Calu3 (cell line): ENCODE measurements at regions of chr16 and their contacts with region 1.

Region 1: GRCh38 chr16:75110637-75111513 is 5.7 kb downstream of the LDHD start:
- DNase-seq: peak; percentile 91
- H3K4me3 Mint-ChIP-seq: no peak overlapping the region
- H3K27ac Mint-ChIP-seq: no peak overlapping the region
- H3K4me1 Mint-ChIP-seq: peaks cover 31% of the 10 kb centered on the region
- H3K27me3 Mint-ChIP-seq: no peaks in the 10 kb centered on the region
- CTCF ChIP-seq: peak; percentile 91

Region 2: DNA sequence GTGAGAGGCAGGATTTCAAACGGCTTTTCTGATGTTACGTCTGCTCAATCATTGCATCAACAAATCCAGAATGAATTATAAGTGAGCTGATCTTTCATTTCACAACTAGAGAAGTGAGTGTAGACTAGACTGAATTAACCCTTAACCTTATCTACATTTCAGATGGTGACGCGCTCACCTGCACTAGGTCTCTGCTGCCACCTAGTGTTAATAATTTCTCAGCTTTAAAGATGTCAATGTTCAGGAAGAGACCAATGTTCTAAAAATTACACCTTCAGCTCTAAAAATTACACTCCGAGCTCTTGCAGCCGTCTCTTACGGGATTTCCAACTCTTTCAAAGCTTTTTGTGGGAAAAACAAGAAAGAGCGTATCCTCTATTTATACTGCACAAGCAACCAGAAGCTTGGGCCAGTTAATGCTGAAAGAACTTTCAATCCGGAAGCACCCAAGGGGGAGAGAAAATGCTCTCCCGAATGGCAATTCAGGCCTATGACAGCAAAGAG is 248.1 kb before region 1 on chr16:
- CTCF ChIA-PET with region 1: interaction called, 10 read pairs
- intact Hi-C with region 1: no loop called
- DNase-seq: peak; percentile 45
- H3K4me3 Mint-ChIP-seq: no peak overlapping the region
- H3K27ac Mint-ChIP-seq: peak overlapping the region; percentile 26
- H3K4me1 Mint-ChIP-seq: peaks cover 9% of the 10 kb centered on the region
- H3K27me3 Mint-ChIP-seq: no peaks in the 10 kb centered on the region
- CTCF ChIP-seq: peak; percentile 91

Region 3: DNA sequence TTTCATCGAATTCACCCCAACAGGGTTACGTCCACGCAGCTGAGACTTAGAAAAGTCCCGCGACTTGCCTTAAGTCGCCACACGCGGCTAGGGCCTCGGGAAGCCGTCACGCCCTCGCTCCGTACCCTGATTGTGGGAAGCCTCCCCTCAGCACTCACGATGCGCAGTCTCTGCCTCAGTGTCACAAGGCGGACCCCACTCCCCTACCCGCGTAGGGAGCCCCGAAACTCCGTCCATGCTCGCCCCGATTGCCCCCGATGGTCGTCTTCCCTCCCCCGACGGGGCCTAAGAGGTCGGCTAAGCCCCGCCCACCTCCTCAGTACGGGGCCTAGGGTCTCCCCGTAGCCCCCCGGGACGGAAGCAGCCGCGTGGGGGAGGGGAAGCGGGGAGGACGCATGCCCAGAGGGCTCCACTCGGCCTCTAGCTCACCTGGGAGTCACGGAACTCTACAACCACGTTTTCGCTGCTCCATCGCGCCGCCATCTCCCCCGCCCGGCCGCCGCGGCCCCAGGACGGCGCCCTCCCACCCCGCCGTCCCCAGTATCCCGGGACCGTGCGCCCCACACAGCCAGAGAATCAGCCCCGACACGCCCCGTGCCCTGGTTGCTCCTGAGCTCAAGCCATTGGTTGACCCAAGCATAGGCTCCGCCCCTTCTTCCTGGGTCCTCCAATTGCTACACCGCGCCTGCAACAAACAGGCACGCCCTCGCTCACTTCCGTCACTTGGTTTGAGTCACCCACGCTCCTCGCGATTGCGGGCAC is 126.2 kb before region 1 on chr16 and contains the start of gene WDR59:
- CTCF ChIA-PET with region 1: interaction called, 30 read pairs
- intact Hi-C with region 1: no loop called
- DNase-seq: peak; percentile 99
- H3K4me3 Mint-ChIP-seq: peak within 1 kb of the TSS; percentile 79
- H3K27ac Mint-ChIP-seq: peak within 1 kb of the TSS; percentile 86
- H3K4me1 Mint-ChIP-seq: no peaks in the 10 kb centered on the region
- H3K27me3 Mint-ChIP-seq: no peaks in the 10 kb centered on the region
- CTCF ChIP-seq: no peak
- total RNA-seq, gene WDR59: 95.4 and 97.3 TPM in 2 replicates

Region 4: DNA sequence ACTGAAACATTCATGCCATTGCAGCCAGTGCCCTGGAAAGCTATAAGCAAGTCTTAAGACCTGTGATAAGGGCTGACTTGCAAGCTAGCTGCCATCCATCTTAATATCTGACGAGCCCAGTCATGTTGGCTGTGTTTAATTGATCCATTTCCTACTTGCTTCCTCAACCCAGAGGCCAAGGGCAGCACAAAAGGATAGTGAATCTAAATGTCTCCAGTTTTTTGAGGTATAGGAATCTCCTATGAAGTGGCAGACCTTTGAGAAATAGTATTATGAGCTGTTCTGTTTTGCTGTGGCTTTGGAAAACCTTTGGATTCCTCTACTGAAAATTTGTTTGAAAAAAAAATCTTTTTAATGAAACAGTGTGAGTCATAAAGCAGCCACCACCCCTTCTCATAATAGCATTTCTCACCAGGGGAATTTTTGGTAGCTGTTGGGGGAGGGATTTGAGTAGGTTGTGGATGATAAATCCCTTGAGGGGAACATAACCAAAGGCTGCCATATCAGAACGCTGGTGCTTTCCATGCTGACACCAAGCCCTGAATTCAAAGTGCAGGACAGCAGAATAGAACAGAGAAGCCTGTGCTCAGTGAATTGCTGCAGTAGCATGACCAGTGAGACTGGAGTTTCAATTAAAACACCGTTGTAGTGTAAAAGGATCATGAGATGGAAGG is 99.1 kb before region 1 on chr16:
- CTCF ChIA-PET with region 1: interaction called, 16 read pairs
- intact Hi-C with region 1: no loop called
- DNase-seq: peak; percentile 51
- H3K4me3 Mint-ChIP-seq: peak overlapping the region; percentile 34
- H3K27ac Mint-ChIP-seq: peak overlapping the region; percentile 33
- H3K4me1 Mint-ChIP-seq: peaks cover 24% of the 10 kb centered on the region
- H3K27me3 Mint-ChIP-seq: no peaks in the 10 kb centered on the region
- CTCF ChIP-seq: no peak

Region 5: DNA sequence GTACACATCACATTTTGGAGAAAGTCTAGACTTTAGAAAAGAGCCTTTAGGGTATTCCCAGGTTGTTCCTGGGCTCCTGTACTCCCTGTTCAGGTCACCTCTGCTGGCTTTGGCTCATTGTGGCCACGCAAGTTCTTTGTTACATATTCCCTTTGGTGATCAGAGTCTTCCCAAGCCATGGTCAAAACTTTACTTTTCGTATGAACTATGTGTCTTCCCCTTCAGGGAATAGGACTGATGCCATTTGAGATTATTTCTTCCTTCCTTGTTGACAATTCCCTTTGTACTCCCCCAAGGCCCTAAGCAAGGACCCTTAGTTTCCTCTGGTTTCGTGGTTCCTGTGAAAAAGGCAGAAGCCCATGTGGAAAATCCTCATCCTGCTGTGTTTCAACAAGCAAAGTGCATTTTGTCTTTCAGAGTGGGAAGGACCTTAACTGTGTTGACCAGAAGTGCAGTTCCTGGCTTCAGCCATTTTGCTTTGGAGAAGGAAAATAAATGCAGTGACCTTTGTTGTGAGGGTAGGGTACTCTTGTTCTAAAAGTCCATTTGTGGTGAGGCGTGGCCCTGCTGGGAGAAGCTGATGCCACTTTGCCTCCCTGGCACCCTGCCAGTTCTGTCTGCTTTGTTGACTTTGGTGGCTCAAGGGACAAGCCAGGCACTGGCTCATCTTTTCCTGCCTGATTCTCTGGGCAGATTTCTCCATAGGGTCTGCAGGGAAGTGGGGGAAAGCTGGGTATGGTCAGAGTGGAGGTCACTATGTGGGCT is 56.9 kb before region 1 on chr16:
- CTCF ChIA-PET with region 1: no interaction called
- intact Hi-C with region 1: no loop called
- DNase-seq: peak; percentile 55
- H3K4me3 Mint-ChIP-seq: no peak overlapping the region
- H3K27ac Mint-ChIP-seq: no peak overlapping the region
- H3K4me1 Mint-ChIP-seq: peaks cover 13% of the 10 kb centered on the region
- H3K27me3 Mint-ChIP-seq: no peaks in the 10 kb centered on the region
- CTCF ChIP-seq: no peak

Region 6: GRCh38 chr16:75099756-75100602 is 10.9 kb before region 1 on chr16:
- CTCF ChIA-PET with region 1: interaction called, 20 read pairs
- intact Hi-C with region 1: no loop called
- DNase-seq: no peak
- H3K4me3 Mint-ChIP-seq: no peak overlapping the region
- H3K27ac Mint-ChIP-seq: no peak overlapping the region
- H3K4me1 Mint-ChIP-seq: peaks cover 15% of the 10 kb centered on the region
- H3K27me3 Mint-ChIP-seq: peaks cover 16% of the 10 kb centered on the region
- CTCF ChIP-seq: no peak